ENCODE measurements at regions of chr7 and their contacts with region 1.

Region 1: GRCh38 chr7:139618482-139619366 is 95.2 kb downstream of the CLEC2L start:
- DNase-seq: peak in 1 of 4 donors; percentile 37
- ATAC-seq: peak; percentile 44
- H3K4me3 ChIP-seq: no peak overlapping the region
- H3K27ac ChIP-seq: no peak overlapping the region
- H3K4me1 ChIP-seq: peaks cover 5 to 7% of the 10 kb centered on the region in 2 donors
- H3K27me3 ChIP-seq: no peaks in the 10 kb centered on the region
- CTCF ChIP-seq: peak in 1 of 2 donors; percentile 39

Region 2: GRCh38 chr7:139494835-139495579 is 123.7 kb before region 1 on chr7:
- intact Hi-C with region 1: loop called in 1 of 2 experiments (anchors 10 kb)
- DNase-seq: no peak
- ATAC-seq: no peak
- H3K4me3 ChIP-seq: no peak overlapping the region
- H3K27ac ChIP-seq: no peak overlapping the region
- H3K4me1 ChIP-seq: peaks cover 0 to 3% of the 10 kb centered on the region in 2 donors
- H3K27me3 ChIP-seq: peaks cover 0 to 11% of the 10 kb centered on the region in 2 donors
- CTCF ChIP-seq: no peak

Region 3: DNA sequence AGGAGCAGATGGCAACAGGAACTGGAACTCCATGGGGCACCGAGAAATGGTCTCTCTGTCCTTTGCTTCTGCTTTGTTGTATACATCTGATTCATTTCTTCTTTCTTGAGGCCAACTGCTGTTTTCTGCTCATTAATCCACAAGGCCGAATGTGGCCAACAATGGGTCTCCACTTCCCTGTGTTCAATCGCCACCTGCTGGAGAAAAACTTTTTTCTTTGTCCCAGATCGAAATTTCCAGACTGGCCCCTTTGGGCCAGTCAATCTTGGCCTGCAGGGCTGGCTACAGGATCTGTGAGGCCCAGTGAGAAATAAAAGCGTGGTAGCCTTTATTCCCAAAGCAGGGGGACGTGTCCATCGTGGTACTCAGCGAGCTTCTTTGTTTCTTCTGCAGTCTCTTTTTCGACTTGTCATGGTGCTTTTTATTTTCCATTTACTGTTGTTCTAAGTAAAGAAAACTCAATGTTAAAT is 385.2 kb after region 1 on chr7:
- intact Hi-C with region 1: loop called in 1 of 2 experiments (anchors 10 kb)
- DNase-seq: peak in 1 of 4 donors; percentile 53
- ATAC-seq: peak; percentile 50
- H3K4me3 ChIP-seq: no peak overlapping the region
- H3K27ac ChIP-seq: no peak overlapping the region
- H3K4me1 ChIP-seq: no peaks in the 10 kb centered on the region
- H3K27me3 ChIP-seq: no peaks in the 10 kb centered on the region
- CTCF ChIP-seq: peak; percentile 25 to 31

Measured in left lung (tissue), 14 donors.